ENCODE measurements at regions of chr6 and their contacts with region 1.

Region 1: GRCh38 chr6:21438237-21438985 is 155.1 kb upstream of the SOX4 start:
- DNase-seq: peak; percentile 23
- H3K4me3 Mint-ChIP-seq: peak overlapping the region; percentile 74
- H3K27ac Mint-ChIP-seq: peak overlapping the region; percentile 96
- H3K4me1 Mint-ChIP-seq: peaks cover 22% of the 10 kb centered on the region
- H3K27me3 Mint-ChIP-seq: peaks cover 14% of the 10 kb centered on the region

Region 2: GRCh38 chr6:20708367-20709124 is 729.9 kb before region 1 on chr6:
- intact Hi-C with region 1: loop called (anchors 5 kb)
- DNase-seq: no peak
- H3K4me3 Mint-ChIP-seq: no peak overlapping the region
- H3K27ac Mint-ChIP-seq: peak overlapping the region; percentile 38
- H3K4me1 Mint-ChIP-seq: peaks cover 62% of the 10 kb centered on the region
- H3K27me3 Mint-ChIP-seq: no peaks in the 10 kb centered on the region

Region 3: DNA sequence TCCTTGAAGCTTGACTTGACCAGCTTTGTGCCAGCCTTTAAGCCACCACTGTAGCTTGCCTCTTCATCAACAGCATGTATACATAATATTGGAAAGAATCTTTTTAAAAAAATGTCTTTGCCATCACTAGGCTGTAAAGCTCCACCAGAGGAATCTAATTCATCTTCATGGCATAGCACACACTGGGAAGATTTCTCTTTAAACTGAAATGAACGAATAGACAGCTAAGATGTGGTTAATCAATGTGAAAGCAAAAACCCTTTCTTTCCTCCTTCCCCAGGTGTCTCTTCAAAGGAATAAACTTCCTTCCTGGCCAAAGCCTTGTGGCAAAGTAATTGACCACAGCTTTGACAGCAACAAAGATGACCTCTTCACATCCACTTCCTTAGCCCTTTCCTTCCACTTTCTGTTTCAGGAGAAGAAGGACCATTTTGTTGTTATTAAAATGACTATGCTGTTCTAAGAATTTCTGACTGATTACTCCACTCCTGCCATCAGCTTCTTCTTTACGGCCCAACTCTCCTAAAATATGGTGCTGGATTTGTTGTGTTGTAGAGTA is 273.6 kb before region 1 on chr6:
- intact Hi-C with region 1: loop called (anchors 5 kb)
- DNase-seq: no peak
- H3K4me3 Mint-ChIP-seq: no peak overlapping the region
- H3K27ac Mint-ChIP-seq: peak overlapping the region; percentile 44
- H3K4me1 Mint-ChIP-seq: peaks cover 34% of the 10 kb centered on the region
- H3K27me3 Mint-ChIP-seq: no peaks in the 10 kb centered on the region

Region 4: GRCh38 chr6:21180155-21180554 is 258.3 kb before region 1 on chr6:
- intact Hi-C with region 1: loop called (anchors 1 kb)
- DNase-seq: no peak
- H3K4me3 Mint-ChIP-seq: no peak overlapping the region
- H3K27ac Mint-ChIP-seq: peak overlapping the region; percentile 53
- H3K4me1 Mint-ChIP-seq: peaks cover 23% of the 10 kb centered on the region
- H3K27me3 Mint-ChIP-seq: no peaks in the 10 kb centered on the region

Region 5: GRCh38 chr6:21263531-21264287 is 174.7 kb before region 1 on chr6:
- intact Hi-C with region 1: loop called (anchors 1 kb)
- DNase-seq: no peak
- H3K4me3 Mint-ChIP-seq: no peak overlapping the region
- H3K27ac Mint-ChIP-seq: no peak overlapping the region
- H3K4me1 Mint-ChIP-seq: peaks cover 26% of the 10 kb centered on the region
- H3K27me3 Mint-ChIP-seq: no peaks in the 10 kb centered on the region

Region 6: GRCh38 chr6:21402368-21402767 is 36.0 kb before region 1 on chr6:
- intact Hi-C with region 1: loop called (anchors 1 kb)
- DNase-seq: no peak
- H3K4me3 Mint-ChIP-seq: no peak overlapping the region
- H3K27ac Mint-ChIP-seq: peak overlapping the region; percentile 8
- H3K4me1 Mint-ChIP-seq: peaks cover 15% of the 10 kb centered on the region
- H3K27me3 Mint-ChIP-seq: peaks cover 6% of the 10 kb centered on the region

Region 7: GRCh38 chr6:21478863-21479539 is 40.6 kb after region 1 on chr6:
- intact Hi-C with region 1: no loop called
- DNase-seq: no peak
- H3K4me3 Mint-ChIP-seq: no peak overlapping the region
- H3K27ac Mint-ChIP-seq: no peak overlapping the region
- H3K4me1 Mint-ChIP-seq: no peaks in the 10 kb centered on the region
- H3K27me3 Mint-ChIP-seq: peaks cover 19% of the 10 kb centered on the region